ENCODE measurements at regions of chrX and their contacts with region 1.

Region 1: GRCh38 chrX:16903274-16904022 is 33.3 kb upstream of the RBBP7 start:
- DNase-seq: no peak
- H3K4me3 ChIP-seq: no peak overlapping the region
- H3K27ac ChIP-seq: no peak overlapping the region
- H3K4me1 ChIP-seq: no peaks in the 10 kb centered on the region
- H3K27me3 ChIP-seq: no peaks in the 10 kb centered on the region
- CTCF ChIP-seq: no peak
- EP300 ChIP-seq: no peak
- POLR2A ChIP-seq: no peak

Region 2: DNA sequence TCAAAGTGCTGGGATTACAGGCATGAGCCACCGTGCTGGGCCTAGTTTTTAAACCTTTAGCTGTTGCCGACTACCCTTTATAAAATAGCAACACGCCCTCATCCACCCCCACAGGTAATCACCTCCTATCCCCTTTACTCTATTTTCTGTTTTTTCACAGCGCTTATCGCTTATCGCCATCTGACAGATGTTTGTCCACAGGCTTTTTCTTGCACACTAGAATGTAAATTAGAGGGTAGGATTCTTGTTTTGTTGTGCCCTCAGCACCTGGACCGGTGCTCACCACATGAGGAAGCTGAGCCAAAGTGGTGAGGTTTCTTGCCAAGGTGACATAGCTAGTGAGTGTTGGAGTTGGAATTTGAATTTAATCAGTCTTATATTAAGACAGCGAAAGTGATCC is 30.4 kb before region 1 on chrX:
- in situ Hi-C with region 1: no loop called
- intact Hi-C with region 1: no loop called
- DNase-seq: no peak
- H3K4me3 ChIP-seq: no peak overlapping the region
- H3K27ac ChIP-seq: no peak overlapping the region
- H3K4me1 ChIP-seq: peaks cover 10 to 17% (median 13%) of the 10 kb centered on the region in 4 donors
- H3K27me3 ChIP-seq: no peaks in the 10 kb centered on the region
- CTCF ChIP-seq: no peak
- EP300 ChIP-seq: no peak
- POLR2A ChIP-seq: no peak

Region 3: DNA sequence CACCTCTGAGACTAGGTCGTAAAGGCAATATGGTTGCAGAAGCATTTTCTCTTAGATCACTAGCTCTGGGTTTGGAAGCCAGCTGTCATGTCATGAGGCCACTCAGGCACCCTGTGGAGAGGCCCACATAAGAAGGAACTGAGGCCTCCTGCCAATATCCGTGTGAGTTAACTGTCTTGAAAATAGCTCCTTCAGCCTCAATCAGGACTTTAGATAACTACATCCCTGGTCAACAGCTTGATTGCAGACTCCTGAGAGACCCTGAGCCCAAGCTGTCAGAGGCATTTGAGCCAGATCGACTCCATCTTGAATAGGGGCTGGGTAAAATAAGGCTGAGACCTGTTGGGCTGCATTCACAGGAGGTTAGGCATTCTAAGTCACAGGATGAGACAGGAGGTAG is 27.9 kb after region 1 on chrX:
- in situ Hi-C with region 1: no loop called
- intact Hi-C with region 1: no loop called
- DNase-seq: no peak
- H3K4me3 ChIP-seq: no peak overlapping the region
- H3K27ac ChIP-seq: no peak overlapping the region
- H3K4me1 ChIP-seq: no peaks in the 10 kb centered on the region
- H3K27me3 ChIP-seq: no peaks in the 10 kb centered on the region
- CTCF ChIP-seq: no peak
- EP300 ChIP-seq: no peak
- POLR2A ChIP-seq: no peak

Region 4: GRCh38 chrX:17046478-17047097 is 143.1 kb after region 1 on chrX:
- in situ Hi-C with region 1: loop called in 3 of 4 experiments (anchors 25 kb)
- intact Hi-C with region 1: no loop called
- DNase-seq: peak; percentile 67
- H3K4me3 ChIP-seq: no peak overlapping the region
- H3K27ac ChIP-seq: no peak overlapping the region
- H3K4me1 ChIP-seq: no peaks in the 10 kb centered on the region
- H3K27me3 ChIP-seq: no peaks in the 10 kb centered on the region
- CTCF ChIP-seq: peak; percentile 60 to 76 (median 67)
- EP300 ChIP-seq: no peak
- POLR2A ChIP-seq: no peak